CD4-positive, alpha-beta T cell (primary cell): ENCODE measurements at regions of chr16 and their contacts with region 1.

Region 1: DNA sequence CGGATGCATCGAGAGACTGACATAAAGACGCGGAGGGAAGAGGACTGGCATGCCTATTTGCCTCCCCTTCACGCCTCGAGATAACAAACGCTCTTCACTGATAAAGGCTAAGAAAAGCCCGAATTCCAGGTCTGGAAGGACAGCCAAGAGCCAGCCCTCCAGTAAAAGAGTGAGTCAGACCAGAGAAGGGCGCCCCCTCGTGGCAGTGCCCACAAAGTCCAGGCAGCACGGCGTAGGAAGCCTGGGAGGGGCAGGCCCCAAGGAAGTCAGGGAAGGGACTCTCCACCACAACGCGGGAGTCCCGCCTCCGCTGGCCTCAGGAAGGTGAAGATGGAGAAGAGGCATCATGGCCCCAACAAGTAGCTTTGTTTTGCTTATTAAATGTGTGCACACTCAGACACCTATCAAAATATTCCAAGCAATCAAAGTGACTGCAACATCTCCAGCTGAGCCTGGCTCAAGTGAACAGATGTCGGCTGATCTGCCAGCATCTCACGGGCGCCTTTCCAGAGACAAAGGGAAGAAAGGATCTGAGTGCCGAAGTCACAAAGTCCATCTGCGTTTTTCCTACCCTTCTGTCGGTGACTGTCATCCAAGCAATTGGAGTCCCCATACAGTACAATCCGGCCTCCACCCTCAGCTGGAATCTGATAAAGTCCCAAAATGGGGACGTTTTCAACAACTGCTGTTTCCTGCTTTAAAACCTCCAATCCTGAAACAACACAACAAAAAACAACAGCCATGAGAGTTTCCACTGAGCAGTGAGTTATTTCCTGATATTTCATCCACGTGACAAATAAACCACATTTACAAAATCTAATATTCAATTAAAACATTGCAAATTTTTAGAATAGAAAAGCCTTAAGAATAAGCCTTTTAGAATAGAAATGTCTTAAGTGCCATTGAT is 20.4 kb upstream of the SLC38A8 start:
- DNase-seq: peak; percentile 32 to 77 (median 55)
- ATAC-seq: peak; percentile 80
- H3K4me3 ChIP-seq: no peak overlapping the region
- H3K4me3 Mint-ChIP-seq: peak overlapping the region; percentile 25
- H3K27ac ChIP-seq: no peak overlapping the region
- H3K27ac Mint-ChIP-seq: no peak overlapping the region
- H3K4me1 ChIP-seq: no peaks in the 10 kb centered on the region
- H3K4me1 Mint-ChIP-seq: peaks cover 3% of the 10 kb centered on the region
- H3K27me3 ChIP-seq: no peaks in the 10 kb centered on the region
- H3K27me3 Mint-ChIP-seq: no peaks in the 10 kb centered on the region
- CTCF ChIP-seq: peak; percentile 77

Region 2: GRCh38 chr16:83826146-83826913 is 236.7 kb before region 1 on chr16:
- CTCF ChIA-PET with region 1: no interaction called
- POLR2A ChIA-PET with region 1: no interaction called
- intact Hi-C with region 1: loop called (anchors 1 to 2 kb)
- DNase-seq: peak; percentile 63 to 85 (median 77)
- ATAC-seq: peak; percentile 98
- H3K4me3 ChIP-seq: no peak overlapping the region
- H3K4me3 Mint-ChIP-seq: no peak overlapping the region
- H3K27ac ChIP-seq: no peak overlapping the region
- H3K27ac Mint-ChIP-seq: no peak overlapping the region
- H3K4me1 ChIP-seq: peaks cover 6% of the 10 kb centered on the region
- H3K4me1 Mint-ChIP-seq: peaks cover 7% of the 10 kb centered on the region
- H3K27me3 ChIP-seq: no peaks in the 10 kb centered on the region
- H3K27me3 Mint-ChIP-seq: peaks cover 9% of the 10 kb centered on the region
- CTCF ChIP-seq: peak; percentile 84

Region 3: GRCh38 chr16:83898463-83899271 is 164.3 kb before region 1 on chr16 and contains the start of gene MLYCD:
- CTCF ChIA-PET with region 1: no interaction called
- POLR2A ChIA-PET with region 1: no interaction called
- intact Hi-C with region 1: no loop called
- DNase-seq: peak; percentile 40 to 88 (median 63)
- ATAC-seq: peak; percentile 92
- H3K4me3 ChIP-seq: peak within 1 kb of the TSS; percentile 70
- H3K4me3 Mint-ChIP-seq: peak within 1 kb of the TSS; percentile 99
- H3K27ac ChIP-seq: no peak within 1 kb of the TSS
- H3K27ac Mint-ChIP-seq: peak within 1 kb of the TSS; percentile 83
- H3K4me1 ChIP-seq: peaks cover 12% of the 10 kb centered on the region
- H3K4me1 Mint-ChIP-seq: peaks cover 46% of the 10 kb centered on the region
- H3K27me3 ChIP-seq: no peaks in the 10 kb centered on the region
- H3K27me3 Mint-ChIP-seq: no peaks in the 10 kb centered on the region
- CTCF ChIP-seq: no peak
- total RNA-seq, gene MLYCD: 4.7 to 5.3 TPM

Region 4: GRCh38 chr16:83956336-83957289 is 106.4 kb before region 1 on chr16:
- CTCF ChIA-PET with region 1: no interaction called
- POLR2A ChIA-PET with region 1: no interaction called
- intact Hi-C with region 1: loop called (anchors 1 to 5 kb)
- DNase-seq: peak; percentile 44 to 78 (median 58)
- ATAC-seq: peak; percentile 52
- H3K4me3 ChIP-seq: no peak overlapping the region
- H3K4me3 Mint-ChIP-seq: no peak overlapping the region
- H3K27ac ChIP-seq: no peak overlapping the region
- H3K27ac Mint-ChIP-seq: no peak overlapping the region
- H3K4me1 ChIP-seq: peaks cover 17% of the 10 kb centered on the region
- H3K4me1 Mint-ChIP-seq: peaks cover 12% of the 10 kb centered on the region
- H3K27me3 ChIP-seq: peaks cover 36 to 39% of the 10 kb centered on the region in 2 experiments
- H3K27me3 Mint-ChIP-seq: peaks cover 33% of the 10 kb centered on the region
- CTCF ChIP-seq: peak; percentile 70